Dendritic cell treated with granulocyte-macrophage colony-stimulating factor and Interleukin-4, amounts not matched to agents 40 ng/mL and 50 ng/mL, for 4 days (primary cell): ENCODE measurements at regions of chr7 and their contacts with region 1.

Region 1: DNA sequence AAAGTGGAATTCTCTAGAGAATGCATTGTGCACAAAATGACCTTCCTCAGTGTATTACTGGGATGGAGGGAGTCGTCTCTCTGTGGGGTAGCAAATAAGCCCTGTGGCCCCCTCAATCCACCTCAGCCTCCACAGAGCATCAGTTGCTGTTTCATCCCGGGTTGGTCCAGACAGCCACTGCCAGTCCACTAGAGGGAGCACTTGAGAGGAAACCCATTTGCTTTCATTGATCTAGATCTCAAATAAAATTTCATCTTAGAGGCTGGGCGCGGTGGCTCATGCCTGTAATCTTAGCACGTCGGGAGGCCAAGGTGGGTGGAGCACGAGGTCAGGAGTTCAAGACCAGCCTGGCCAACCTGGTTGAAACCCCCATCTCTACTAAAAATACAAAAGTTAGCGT is 1128.7 kb downstream of the CNTNAP2 start:
- H3K4me3 Mint-ChIP-seq: no peak overlapping the region
- H3K27ac Mint-ChIP-seq: no peak overlapping the region
- H3K4me1 Mint-ChIP-seq: no peaks in the 10 kb centered on the region
- H3K27me3 Mint-ChIP-seq: no peaks in the 10 kb centered on the region

Region 2: GRCh38 chr7:146781352-146782116 is 463.8 kb before region 1 on chr7:
- intact Hi-C with region 1: no loop called
- H3K4me3 Mint-ChIP-seq: no peak overlapping the region
- H3K27ac Mint-ChIP-seq: no peak overlapping the region
- H3K4me1 Mint-ChIP-seq: no peaks in the 10 kb centered on the region
- H3K27me3 Mint-ChIP-seq: no peaks in the 10 kb centered on the region

Region 3: DNA sequence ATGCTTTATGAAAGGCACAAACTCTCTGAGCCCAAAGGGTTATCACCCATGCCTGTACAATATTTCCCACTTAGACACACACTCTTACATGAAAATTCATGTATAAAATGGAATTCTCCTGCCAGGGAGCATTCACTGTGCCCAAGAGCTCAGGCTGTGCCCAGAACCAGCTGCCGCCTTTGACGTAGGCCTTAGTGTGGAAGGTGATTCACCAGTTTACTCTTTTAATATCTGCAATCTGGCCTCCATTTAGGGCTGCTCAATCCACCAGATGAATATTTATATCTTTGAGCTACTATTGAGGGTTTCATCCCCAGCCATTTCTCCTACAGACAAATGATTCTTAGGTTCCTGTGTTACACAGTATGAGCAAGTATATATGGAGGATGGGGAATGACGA is 279.0 kb before region 1 on chr7:
- intact Hi-C with region 1: no loop called
- H3K4me3 Mint-ChIP-seq: no peak overlapping the region
- H3K27ac Mint-ChIP-seq: no peak overlapping the region
- H3K4me1 Mint-ChIP-seq: no peaks in the 10 kb centered on the region
- H3K27me3 Mint-ChIP-seq: no peaks in the 10 kb centered on the region

Region 4: DNA sequence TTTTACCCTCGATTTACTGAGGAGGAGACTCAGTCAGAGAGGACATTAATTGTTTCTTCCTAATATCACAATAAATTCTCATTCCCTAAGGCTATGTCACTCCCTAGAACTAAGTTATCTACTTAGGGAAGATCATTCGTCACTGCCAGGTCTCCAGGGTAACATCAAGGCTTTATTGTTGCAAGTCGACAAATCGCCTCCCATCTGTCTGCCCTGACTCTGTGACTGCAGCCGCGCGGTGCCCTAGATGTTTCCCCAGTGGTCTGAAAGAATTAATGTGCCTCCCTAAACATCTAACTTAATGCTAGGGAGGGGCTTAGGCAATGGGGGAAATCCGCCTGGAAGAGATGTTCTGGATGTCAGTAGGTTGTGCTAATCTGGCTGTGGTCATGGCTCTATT is 786.5 kb after region 1 on chr7:
- intact Hi-C with region 1: no loop called
- H3K4me3 Mint-ChIP-seq: no peak overlapping the region
- H3K27ac Mint-ChIP-seq: no peak overlapping the region
- H3K4me1 Mint-ChIP-seq: peaks cover 3% of the 10 kb centered on the region
- H3K27me3 Mint-ChIP-seq: no peaks in the 10 kb centered on the region

Region 5: DNA sequence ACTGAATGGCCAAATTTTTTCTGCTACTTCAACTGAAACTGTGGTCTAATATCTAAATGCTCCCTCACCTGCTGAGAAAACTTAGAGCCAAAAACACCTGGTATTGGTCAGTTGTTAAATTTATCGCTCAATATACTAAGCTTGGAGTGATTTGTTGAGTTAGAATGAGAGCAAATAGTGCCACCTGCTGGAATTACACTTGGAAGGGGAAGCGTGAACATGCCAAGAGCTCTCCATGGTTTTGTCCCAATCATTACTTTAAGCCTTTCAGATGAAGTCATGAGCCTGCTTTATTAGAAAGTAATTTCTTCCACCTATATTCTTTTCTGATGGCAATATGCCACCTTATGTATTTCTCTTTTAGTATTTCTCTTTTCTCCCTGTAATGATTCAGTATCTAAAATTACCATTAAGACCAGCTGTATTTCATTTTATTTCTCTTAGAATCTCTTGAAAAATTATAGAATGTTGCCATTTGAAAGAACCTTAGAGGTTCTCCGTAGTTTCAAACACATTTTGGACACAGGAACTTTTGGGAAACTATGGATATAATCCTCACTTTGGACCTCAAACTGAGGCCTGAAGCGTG is 897.5 kb after region 1 on chr7:
- intact Hi-C with region 1: loop called (anchors 5 kb)
- H3K4me3 Mint-ChIP-seq: no peak overlapping the region
- H3K27ac Mint-ChIP-seq: no peak overlapping the region
- H3K4me1 Mint-ChIP-seq: no peaks in the 10 kb centered on the region
- H3K27me3 Mint-ChIP-seq: no peaks in the 10 kb centered on the region